Body of pancreas (tissue), 4 donors: ENCODE measurements at regions of chr11 and their contacts with region 1.

Region 1: DNA sequence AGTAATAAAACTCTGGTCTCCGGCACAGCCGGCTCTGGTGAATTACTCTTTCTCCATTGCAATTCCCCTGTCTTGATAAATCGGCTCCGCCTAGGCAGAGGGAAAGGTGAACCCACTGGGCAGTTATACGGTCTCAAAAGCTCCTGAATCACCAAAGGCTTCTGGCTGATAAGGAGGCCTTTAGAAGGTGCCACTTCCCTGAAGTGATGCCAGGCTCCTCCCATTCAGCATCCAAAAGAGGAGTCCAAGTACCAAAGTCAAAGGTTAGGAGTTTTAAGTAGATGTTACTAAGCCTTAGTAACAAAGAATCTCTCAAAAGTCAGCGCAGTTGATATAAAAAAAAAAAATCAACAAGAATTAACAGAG is 11.8 kb upstream of the ALKBH8 start:
- DNase-seq: no peak
- ATAC-seq: no peak
- H3K4me3 ChIP-seq: no peak overlapping the region
- H3K27ac ChIP-seq: no peak overlapping the region
- H3K4me1 ChIP-seq: no peaks in the 10 kb centered on the region
- H3K27me3 ChIP-seq: no peaks in the 10 kb centered on the region
- CTCF ChIP-seq: no peak
- POLR2A ChIP-seq: no peak

Region 2: GRCh38 chr11:107689317-107690202 is 112.2 kb after region 1 on chr11:
- intact Hi-C with region 1: loop called (anchors 5 kb)
- DNase-seq: peak; percentile 77 to 87 (median 83)
- ATAC-seq: peak; percentile 81
- H3K4me3 ChIP-seq: no peak overlapping the region
- H3K27ac ChIP-seq: no peak overlapping the region
- H3K4me1 ChIP-seq: peaks cover 5% of the 10 kb centered on the region
- H3K27me3 ChIP-seq: no peaks in the 10 kb centered on the region
- CTCF ChIP-seq: peak; percentile 41 to 80 (median 72)
- POLR2A ChIP-seq: no peak